ENCODE measurements at regions of chr2 and their contacts with region 1.

Region 1: GRCh38 chr2:46983065-46983801 is 67.6 kb upstream of the MCFD2 start:
- DNase-seq: no peak
- ATAC-seq: no peak
- H3K4me3 ChIP-seq: no peak overlapping the region
- H3K4me3 Mint-ChIP-seq: no peak overlapping the region
- H3K27ac ChIP-seq: no peak overlapping the region
- H3K27ac Mint-ChIP-seq: peak overlapping the region; percentile 52
- H3K4me1 ChIP-seq: peaks cover 33% of the 10 kb centered on the region
- H3K4me1 Mint-ChIP-seq: peaks cover 49% of the 10 kb centered on the region
- H3K27me3 ChIP-seq: no peaks in the 10 kb centered on the region
- H3K27me3 Mint-ChIP-seq: no peaks in the 10 kb centered on the region
- CTCF ChIP-seq: no peak

Region 2: DNA sequence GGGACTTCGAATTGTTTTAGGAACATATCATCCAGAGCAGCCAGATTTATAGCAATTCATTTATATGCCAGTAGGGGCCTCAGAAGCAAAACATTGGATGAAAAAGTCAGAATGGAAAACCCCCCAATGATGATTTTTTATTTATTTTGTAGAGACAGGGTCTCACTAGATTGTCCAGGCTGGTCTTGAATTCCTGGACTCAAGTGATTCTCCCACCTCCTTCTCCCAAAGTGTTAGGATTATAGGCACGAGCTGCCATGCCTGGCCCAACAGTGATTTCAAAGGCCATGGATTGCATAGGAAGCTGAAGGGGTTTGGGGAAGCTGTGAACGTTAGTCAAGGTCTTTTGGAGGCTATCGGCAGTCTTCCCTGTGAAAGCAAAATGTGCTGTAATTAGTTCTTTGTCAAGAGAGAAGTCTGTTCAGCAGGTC is 45.7 kb before region 1 on chr2:
- CTCF ChIA-PET with region 1: interaction called, 3 read pairs
- POLR2A ChIA-PET with region 1: no interaction called
- intact Hi-C with region 1: loop called in 1 of 2 experiments (anchors 2 kb)
- DNase-seq: peak in 2 of 9 experiments; percentile 33 to 50
- ATAC-seq: no peak
- H3K4me3 ChIP-seq: no peak overlapping the region
- H3K4me3 Mint-ChIP-seq: no peak overlapping the region
- H3K27ac ChIP-seq: no peak overlapping the region
- H3K27ac Mint-ChIP-seq: peak overlapping the region; percentile 55
- H3K4me1 ChIP-seq: peaks cover 9% of the 10 kb centered on the region
- H3K4me1 Mint-ChIP-seq: peaks cover 41% of the 10 kb centered on the region
- H3K27me3 ChIP-seq: no peaks in the 10 kb centered on the region
- H3K27me3 Mint-ChIP-seq: no peaks in the 10 kb centered on the region
- CTCF ChIP-seq: peak; percentile 55

Region 3: DNA sequence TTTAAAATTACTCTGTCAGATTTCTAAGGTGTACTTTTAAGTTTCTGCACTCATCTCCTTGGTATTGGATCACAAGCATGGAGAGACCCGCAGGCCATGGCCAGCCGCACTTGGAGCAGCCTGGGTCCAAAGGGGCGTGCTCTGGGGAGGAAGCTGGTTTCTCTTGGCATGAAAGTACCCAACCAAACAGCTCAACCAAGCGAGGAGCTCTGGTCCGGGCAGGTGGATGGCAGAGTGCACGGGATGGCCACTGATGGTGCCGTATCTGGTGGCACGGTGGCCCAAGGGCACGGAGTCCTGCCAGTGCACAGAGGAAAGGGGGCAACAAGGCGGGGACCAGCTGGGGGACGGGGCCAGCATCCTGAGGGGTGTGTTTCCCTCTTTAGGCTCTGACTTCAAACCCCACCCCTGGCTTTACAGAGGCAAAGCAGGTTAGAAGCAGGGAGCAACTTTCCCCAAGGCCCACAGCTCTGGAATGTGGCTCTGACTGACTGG is 35.3 kb before region 1 on chr2:
- CTCF ChIA-PET with region 1: interaction called, 3 read pairs
- POLR2A ChIA-PET with region 1: interaction called, 3 read pairs
- intact Hi-C with region 1: loop called in 1 of 2 experiments (anchors 2 kb)
- DNase-seq: no peak
- ATAC-seq: no peak
- H3K4me3 ChIP-seq: no peak overlapping the region
- H3K4me3 Mint-ChIP-seq: no peak overlapping the region
- H3K27ac ChIP-seq: no peak overlapping the region
- H3K27ac Mint-ChIP-seq: no peak overlapping the region
- H3K4me1 ChIP-seq: peaks cover 40% of the 10 kb centered on the region
- H3K4me1 Mint-ChIP-seq: peaks cover 68% of the 10 kb centered on the region
- H3K27me3 ChIP-seq: no peaks in the 10 kb centered on the region
- H3K27me3 Mint-ChIP-seq: no peaks in the 10 kb centered on the region
- CTCF ChIP-seq: no peak

Region 4: DNA sequence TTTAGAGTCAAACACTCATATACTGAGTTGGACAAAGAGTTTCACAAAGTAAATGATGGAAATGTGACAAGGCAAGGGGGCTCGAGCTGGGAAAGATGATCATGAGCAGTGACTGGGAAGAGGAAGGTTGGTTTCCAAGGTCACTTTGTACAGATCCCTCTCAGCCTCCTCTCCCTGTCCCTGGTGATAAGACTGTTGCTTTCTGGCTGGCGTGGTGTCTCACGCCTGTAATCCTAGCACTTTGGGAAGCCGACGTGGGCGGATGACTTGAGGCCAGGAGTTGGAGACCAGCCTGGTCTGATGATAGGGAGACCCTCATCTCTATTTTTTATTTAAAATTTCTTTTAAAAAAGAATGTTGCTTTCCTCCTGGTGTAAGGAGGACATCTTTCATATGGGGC is 258.5 kb after region 1 on chr2:
- CTCF ChIA-PET with region 1: no interaction called
- POLR2A ChIA-PET with region 1: no interaction called
- intact Hi-C with region 1: no loop called
- DNase-seq: no peak
- ATAC-seq: no peak
- H3K4me3 ChIP-seq: no peak overlapping the region
- H3K4me3 Mint-ChIP-seq: no peak overlapping the region
- H3K27ac ChIP-seq: no peak overlapping the region
- H3K27ac Mint-ChIP-seq: no peak overlapping the region
- H3K4me1 ChIP-seq: no peaks in the 10 kb centered on the region
- H3K4me1 Mint-ChIP-seq: no peaks in the 10 kb centered on the region
- H3K27me3 ChIP-seq: no peaks in the 10 kb centered on the region
- H3K27me3 Mint-ChIP-seq: peaks cover 2% of the 10 kb centered on the region
- CTCF ChIP-seq: no peak

Measured in CD8-positive, alpha-beta T cell (primary cell).